ENCODE measurements at regions of chr5 and their contacts with region 1.

Region 1: DNA sequence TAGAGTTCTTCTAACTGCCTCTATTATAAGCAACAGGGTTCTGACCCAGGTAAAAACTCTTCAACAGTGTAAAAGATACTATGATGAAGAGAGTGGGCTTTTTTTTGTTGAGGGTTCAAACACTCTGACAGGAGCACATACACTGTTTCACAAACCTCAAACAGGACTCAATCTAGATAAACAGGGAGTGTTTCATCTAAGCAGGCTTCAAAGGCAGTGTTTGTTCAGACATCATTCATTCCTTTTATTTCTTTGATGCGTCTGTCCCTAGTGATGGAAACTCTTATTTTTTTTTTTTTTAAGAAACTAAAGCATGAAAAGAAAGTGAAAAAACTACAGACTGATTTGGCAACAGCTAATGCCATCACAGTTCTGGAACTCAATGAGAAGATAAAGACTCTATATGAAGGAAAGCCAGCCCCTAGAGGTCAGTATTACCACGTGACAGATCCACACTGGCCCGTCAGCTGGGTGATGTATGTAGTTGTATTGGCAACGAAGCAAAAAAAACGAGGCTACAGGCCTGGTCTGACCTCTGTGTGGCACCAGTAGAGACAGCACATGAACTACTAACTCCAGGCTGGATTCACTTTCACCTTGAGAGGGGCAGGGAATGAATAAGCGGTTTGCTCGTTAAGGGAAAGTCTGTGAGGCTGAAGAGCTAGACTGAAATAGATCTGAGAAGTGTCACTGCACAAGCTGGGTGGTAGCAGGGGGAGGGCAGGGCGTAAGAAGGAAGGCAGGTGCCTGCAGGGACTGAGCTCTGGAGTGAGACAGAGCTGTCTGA is 172.2 kb downstream of the CCDC192 start:
- DNase-seq: peak in 9 of 35 experiments; percentile 2 to 40 (median 3)
- ATAC-seq: peak in 3 of 4 experiments; percentile 42 to 50 (median 47)
- H3K4me3 ChIP-seq: no peak overlapping the region
- H3K4me3 Mint-ChIP-seq: no peak overlapping the region
- H3K27ac ChIP-seq: no peak overlapping the region
- H3K27ac Mint-ChIP-seq: no peak overlapping the region
- H3K4me1 ChIP-seq: no peaks in the 10 kb centered on the region
- H3K4me1 Mint-ChIP-seq: no peaks in the 10 kb centered on the region
- H3K27me3 ChIP-seq: no peaks in the 10 kb centered on the region
- H3K27me3 Mint-ChIP-seq: peaks cover 0 to 11% of the 10 kb centered on the region in 2 donors

Region 2: DNA sequence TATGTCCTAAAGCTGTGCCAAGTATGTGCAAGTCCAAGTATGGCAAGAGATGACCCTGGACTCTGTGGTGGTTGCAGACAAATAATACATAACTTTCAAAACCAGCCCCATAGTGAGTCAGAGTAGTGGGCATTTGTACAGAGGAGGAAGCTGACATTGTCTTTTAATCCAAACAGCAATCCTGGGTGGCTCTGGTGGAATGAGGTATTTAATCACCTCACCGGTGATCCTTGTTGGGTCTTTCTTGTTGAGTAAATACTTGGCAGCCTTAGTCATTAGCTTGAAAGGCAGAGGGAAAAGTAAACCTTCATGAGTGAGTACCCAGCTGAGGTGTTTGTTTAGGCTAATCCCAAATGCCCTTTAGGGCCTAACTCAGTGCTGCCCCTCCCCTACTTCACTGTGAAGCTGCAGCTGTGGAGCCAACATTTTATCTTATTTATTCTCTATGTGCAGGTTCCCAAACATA is 59.4 kb after region 1 on chr5:
- CTCF ChIA-PET with region 1: no interaction called
- POLR2A ChIA-PET with region 1: no interaction called
- DNase-seq: no peak
- ATAC-seq: no peak
- H3K4me3 ChIP-seq: no peak overlapping the region
- H3K4me3 Mint-ChIP-seq: no peak overlapping the region
- H3K27ac ChIP-seq: no peak overlapping the region
- H3K27ac Mint-ChIP-seq: no peak overlapping the region
- H3K4me1 ChIP-seq: peaks cover 0 to 7% of the 10 kb centered on the region in 2 experiments
- H3K4me1 Mint-ChIP-seq: peaks cover 4 to 5% (median 5%) of the 10 kb centered on the region in 3 donors
- H3K27me3 ChIP-seq: no peaks in the 10 kb centered on the region
- H3K27me3 Mint-ChIP-seq: no peaks in the 10 kb centered on the region

Region 3: GRCh38 chr5:128011339-128011738 is 135.9 kb after region 1 on chr5:
- CTCF ChIA-PET with region 1: no interaction called
- POLR2A ChIA-PET with region 1: interaction called in 1 of 2 experiments, 13 read pairs
- DNase-seq: no peak
- ATAC-seq: no peak
- H3K4me3 ChIP-seq: no peak overlapping the region
- H3K4me3 Mint-ChIP-seq: no peak overlapping the region
- H3K27ac ChIP-seq: no peak overlapping the region
- H3K27ac Mint-ChIP-seq: no peak overlapping the region
- H3K4me1 ChIP-seq: no peaks in the 10 kb centered on the region
- H3K4me1 Mint-ChIP-seq: no peaks in the 10 kb centered on the region
- H3K27me3 ChIP-seq: no peaks in the 10 kb centered on the region
- H3K27me3 Mint-ChIP-seq: no peaks in the 10 kb centered on the region

Measured in T-cell (primary cell).